Activated B cell treated with CpG ODN at 0.5 μM for 24 hours (primary cell): ENCODE measurements at regions of chr7 and their contacts with region 1.

Region 1: DNA sequence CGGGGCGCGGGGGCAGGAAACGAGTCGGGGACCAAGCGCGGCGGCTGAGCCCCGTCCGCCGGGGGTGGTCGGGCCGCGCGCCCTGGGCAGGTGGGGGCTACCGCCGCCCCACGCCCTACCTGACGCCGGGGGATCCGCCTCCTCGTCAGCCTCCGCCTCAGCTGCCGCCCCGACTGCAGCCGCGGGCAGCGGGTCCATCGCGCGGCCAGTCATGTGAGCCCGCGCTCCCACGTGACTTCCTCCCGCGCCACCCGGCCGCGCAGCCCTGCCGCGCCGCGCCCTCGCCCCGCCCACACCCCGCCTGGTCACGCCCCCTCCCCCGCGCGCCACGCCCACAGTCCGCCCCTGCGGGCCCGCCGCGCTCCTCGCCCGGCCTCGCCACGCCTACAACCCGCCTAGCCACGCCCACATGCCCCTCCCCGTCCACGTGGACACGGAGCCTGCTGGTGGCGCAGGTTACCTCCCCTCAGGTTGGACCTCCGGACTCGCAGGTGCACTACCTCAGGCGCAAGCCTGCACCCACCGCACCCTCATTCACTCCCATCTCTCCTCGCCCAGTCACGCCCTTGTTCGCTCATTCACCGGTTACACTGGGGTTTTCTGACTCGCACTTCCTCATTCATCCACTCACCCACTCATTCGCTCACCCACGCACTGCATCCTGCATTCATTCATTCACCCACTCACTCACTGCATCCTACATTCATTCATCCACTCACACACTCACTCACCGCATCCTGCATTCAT is at the start of gene SNX8:
- DNase-seq: peak; percentile 99
- ATAC-seq: peak; percentile 77
- H3K4me3 Mint-ChIP-seq: no peak within 1 kb of the TSS
- H3K27ac Mint-ChIP-seq: peak within 1 kb of the TSS; percentile 98
- H3K4me1 Mint-ChIP-seq: peaks cover 47% of the 10 kb centered on the region
- H3K27me3 Mint-ChIP-seq: no peaks in the 10 kb centered on the region
- CTCF ChIP-seq: no peak
- total RNA-seq, gene SNX8: 175 and 181 TPM in 2 replicates

Region 2: DNA sequence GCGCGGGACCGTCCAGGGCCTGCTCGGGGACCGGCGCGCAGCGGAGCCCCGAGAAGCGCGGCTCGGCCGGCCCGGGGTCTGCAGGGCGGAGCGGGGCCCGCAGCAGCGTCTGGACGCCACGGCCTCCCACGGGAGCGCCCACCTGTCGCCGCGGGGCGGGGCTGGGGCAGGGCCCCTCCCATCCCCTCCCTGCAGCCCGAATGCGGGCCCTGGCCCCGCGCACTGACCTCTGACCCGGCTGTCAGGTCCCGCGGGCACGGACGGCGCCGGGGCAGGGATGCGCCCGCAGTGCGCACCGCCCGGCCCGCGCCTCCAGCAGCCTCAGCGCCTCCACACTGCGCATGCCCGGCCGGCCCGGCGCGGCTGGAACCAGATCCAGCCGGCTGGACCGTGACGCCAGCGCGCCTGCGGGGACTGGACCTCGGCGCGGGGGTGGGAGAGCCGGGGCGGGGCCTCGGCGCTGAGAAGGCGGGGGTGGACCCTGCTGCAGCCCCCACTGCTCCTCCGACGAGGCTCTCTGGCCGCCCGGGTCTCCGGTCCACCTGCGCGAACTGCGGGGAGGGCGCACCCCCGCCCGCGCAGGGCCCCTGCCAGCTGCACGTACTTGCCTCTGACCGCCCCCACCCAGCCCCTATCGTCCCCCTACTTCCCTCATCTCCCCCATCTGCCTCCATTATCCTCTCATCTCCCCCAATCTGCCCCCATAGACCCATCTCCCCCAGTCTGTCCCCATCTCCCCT is 1286.2 kb before region 1 on chr7:
- CTCF ChIA-PET with region 1: no interaction called
- POLR2A ChIA-PET with region 1: no interaction called
- intact Hi-C with region 1: loop called (anchors 10 kb)
- DNase-seq: peak; percentile 85
- ATAC-seq: peak; percentile 38
- H3K4me3 Mint-ChIP-seq: peak overlapping the region; percentile 91
- H3K27ac Mint-ChIP-seq: no peak overlapping the region
- H3K4me1 Mint-ChIP-seq: peaks cover 61% of the 10 kb centered on the region
- H3K27me3 Mint-ChIP-seq: no peaks in the 10 kb centered on the region
- CTCF ChIP-seq: no peak

Region 3: DNA sequence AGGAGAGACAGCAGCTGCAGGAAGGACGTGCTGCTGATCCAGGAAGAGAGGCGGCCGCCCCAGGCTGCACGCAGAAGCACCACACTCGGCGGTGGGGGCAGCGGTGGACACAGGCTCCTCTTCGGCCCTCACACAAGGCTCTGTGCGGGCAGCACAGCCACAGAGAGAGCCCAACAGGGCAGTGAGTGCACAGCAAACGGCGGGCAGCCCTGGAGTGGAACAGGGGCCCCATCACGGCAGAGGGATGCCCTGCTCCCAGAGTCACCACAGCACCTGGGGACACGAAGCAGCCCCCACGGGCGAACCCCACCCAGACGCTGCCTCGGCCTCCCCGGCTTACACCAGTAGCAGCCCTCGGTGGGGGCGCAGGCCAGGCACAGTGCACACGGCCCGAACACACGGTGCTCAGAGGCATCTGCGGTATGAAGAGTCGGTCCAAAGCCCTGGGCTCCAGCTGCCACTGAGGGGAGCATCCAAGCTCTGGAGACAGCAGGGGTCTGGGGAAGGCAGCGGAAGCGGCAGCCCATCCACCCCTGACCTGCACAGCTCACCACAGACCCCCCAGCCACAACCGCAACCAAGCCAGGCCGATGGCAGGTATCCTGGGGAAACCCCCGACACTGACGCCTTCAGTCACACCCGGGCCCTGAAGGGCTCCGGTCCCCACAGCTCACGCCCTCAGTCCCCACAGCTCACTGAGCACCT is 55.6 kb before region 1 on chr7:
- CTCF ChIA-PET with region 1: no interaction called
- POLR2A ChIA-PET with region 1: interaction called, 38 read pairs
- intact Hi-C with region 1: loop called (anchors 1 kb)
- DNase-seq: peak; percentile 58
- ATAC-seq: peak; percentile 74
- H3K4me3 Mint-ChIP-seq: peak overlapping the region; percentile 55
- H3K27ac Mint-ChIP-seq: peak overlapping the region; percentile 89
- H3K4me1 Mint-ChIP-seq: peaks cover 54% of the 10 kb centered on the region
- H3K27me3 Mint-ChIP-seq: no peaks in the 10 kb centered on the region
- CTCF ChIP-seq: no peak

Region 4: DNA sequence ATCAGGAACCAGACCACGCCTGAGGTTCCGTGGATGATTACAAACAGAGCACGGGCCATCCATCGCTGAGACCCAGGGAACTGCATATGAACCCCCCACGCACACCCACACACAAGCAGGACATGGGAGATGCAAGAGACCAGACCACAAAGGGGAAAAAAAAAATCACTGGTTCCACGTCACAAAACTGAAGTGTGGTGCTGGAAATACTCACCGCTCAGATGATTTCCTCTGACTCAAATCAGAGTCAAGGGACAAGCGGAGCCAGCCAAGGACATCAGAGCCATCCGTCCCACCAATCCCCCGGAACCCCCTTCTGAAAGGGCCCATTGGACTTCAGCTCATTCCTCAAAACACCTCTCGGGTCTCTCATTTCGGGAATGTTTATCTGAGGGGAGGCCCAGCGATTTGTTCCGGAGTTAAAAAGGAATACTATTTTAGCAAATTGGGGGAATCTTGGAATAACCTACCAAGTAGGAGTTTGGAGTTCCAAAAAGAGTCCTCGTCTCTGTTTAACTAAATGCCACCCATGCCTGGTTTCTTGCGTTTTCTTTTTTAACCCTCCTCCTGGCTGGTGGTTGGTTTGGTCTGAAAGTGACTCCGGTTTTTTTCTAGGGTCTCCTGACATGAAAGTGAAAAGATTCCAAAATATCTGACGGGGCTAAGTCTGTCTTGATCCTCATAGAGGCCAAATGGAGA is 15.1 kb before region 1 on chr7:
- CTCF ChIA-PET with region 1: interaction called, 3 read pairs
- POLR2A ChIA-PET with region 1: interaction called, 75 read pairs
- intact Hi-C with region 1: loop called (anchors 1 kb)
- DNase-seq: peak; percentile 49
- ATAC-seq: peak; percentile 72
- H3K4me3 Mint-ChIP-seq: peak overlapping the region; percentile 77
- H3K27ac Mint-ChIP-seq: peak overlapping the region; percentile 96
- H3K4me1 Mint-ChIP-seq: peaks cover 76% of the 10 kb centered on the region
- H3K27me3 Mint-ChIP-seq: no peaks in the 10 kb centered on the region
- CTCF ChIP-seq: no peak

Region 5: GRCh38 chr7:2519119-2519930 is 204.9 kb after region 1 on chr7 and contains the start of gene LFNG:
- CTCF ChIA-PET with region 1: no interaction called
- POLR2A ChIA-PET with region 1: no interaction called
- intact Hi-C with region 1: loop called (anchors 5 kb)
- DNase-seq: peak; percentile 94
- ATAC-seq: peak; percentile 75
- H3K4me3 Mint-ChIP-seq: peak within 1 kb of the TSS; percentile 96
- H3K27ac Mint-ChIP-seq: peak within 1 kb of the TSS; percentile 87
- H3K4me1 Mint-ChIP-seq: peaks cover 49% of the 10 kb centered on the region
- H3K27me3 Mint-ChIP-seq: no peaks in the 10 kb centered on the region
- CTCF ChIP-seq: no peak
- total RNA-seq, gene LFNG: 87.4 and 95.8 TPM in 2 replicates